ENCODE measurements at regions of chr5 and their contacts with region 1.

Region 1: DNA sequence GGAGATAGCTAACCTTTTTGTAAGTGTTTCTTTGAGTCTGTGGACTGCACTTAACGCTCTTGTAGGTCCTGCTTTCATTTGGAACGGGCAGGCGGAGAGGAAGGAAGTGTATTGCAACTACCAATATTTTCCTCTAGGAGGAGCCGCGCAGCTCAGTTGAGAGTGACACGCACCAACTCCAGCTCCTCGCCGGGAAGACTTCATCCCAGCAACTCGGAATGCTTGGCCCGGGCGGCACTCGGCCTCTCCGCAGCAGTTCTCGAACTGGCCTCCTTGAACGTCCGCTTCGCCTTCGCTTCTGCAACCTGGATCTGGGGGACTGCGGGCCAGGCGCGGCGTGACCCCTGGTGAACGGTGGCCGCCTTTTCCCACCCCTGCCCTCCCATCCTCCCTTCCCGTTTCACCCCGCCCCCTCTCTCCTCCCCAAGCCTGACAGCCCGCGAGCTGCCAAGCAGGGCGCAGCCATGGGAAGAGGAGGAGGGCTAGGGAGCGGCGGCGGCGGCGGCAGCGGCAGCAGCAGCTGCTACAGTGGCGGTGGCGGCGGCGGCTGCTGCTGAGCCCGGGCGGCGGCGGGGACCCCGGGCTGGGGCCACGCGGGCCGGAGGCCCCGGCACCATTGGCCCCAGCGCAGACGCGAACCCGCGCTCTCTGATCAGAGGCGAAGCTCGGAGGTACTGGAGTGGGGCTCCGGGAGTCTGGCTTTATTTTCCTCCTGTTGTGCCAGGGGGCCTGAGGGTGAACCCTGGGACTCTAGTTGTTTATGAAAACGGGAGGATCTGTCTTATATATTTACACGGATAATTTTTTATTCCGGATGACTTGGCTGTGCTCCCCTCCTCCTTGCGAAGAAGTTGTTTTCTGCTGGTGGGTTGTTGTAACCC is at the start of gene GHR:
- DNase-seq: peak; percentile 82 to 94 (median 91)
- H3K4me3 ChIP-seq: peak within 1 kb of the TSS; percentile 34 to 69 (median 52)
- H3K27ac ChIP-seq: peak within 1 kb of the TSS in 4 of 5 donors; percentile 30 to 93 (median 76)
- H3K4me1 ChIP-seq: peaks cover 5 to 14% of the 10 kb centered on the region in 2 donors
- H3K27me3 ChIP-seq: no peaks in the 10 kb centered on the region
- CTCF ChIP-seq: peak; percentile 53 to 95 (median 84)
- POLR2A ChIP-seq: peak in 1 of 2 donors; percentile 19
- total RNA-seq, gene GHR: 8.2 to 17.1 (median 12.1) TPM

Region 2: GRCh38 chr5:42656651-42657015 is 233.1 kb after region 1 on chr5:
- intact Hi-C with region 1: loop called (anchors 10 kb)
- DNase-seq: no peak
- H3K4me3 ChIP-seq: peak overlapping the region in 1 of 4 donors; percentile 46
- H3K27ac ChIP-seq: no peak overlapping the region
- H3K4me1 ChIP-seq: peaks cover 0 to 11% of the 10 kb centered on the region in 2 donors
- H3K27me3 ChIP-seq: no peaks in the 10 kb centered on the region
- CTCF ChIP-seq: peak; percentile 11 to 62 (median 49)
- POLR2A ChIP-seq: no peak